ENCODE measurements at regions of chr10 and their contacts with region 1.

Region 1: GRCh38 chr10:72248468-72249151 is 25.1 kb upstream of the DDIT4 start:
- DNase-seq: peak; percentile 89
- ATAC-seq: peak; percentile 87
- H3K4me3 Mint-ChIP-seq: peak overlapping the region; percentile 77
- H3K27ac Mint-ChIP-seq: peak overlapping the region; percentile 93
- H3K4me1 Mint-ChIP-seq: peaks cover 72% of the 10 kb centered on the region
- H3K27me3 Mint-ChIP-seq: no peaks in the 10 kb centered on the region
- CTCF ChIP-seq: no peak

Region 2: DNA sequence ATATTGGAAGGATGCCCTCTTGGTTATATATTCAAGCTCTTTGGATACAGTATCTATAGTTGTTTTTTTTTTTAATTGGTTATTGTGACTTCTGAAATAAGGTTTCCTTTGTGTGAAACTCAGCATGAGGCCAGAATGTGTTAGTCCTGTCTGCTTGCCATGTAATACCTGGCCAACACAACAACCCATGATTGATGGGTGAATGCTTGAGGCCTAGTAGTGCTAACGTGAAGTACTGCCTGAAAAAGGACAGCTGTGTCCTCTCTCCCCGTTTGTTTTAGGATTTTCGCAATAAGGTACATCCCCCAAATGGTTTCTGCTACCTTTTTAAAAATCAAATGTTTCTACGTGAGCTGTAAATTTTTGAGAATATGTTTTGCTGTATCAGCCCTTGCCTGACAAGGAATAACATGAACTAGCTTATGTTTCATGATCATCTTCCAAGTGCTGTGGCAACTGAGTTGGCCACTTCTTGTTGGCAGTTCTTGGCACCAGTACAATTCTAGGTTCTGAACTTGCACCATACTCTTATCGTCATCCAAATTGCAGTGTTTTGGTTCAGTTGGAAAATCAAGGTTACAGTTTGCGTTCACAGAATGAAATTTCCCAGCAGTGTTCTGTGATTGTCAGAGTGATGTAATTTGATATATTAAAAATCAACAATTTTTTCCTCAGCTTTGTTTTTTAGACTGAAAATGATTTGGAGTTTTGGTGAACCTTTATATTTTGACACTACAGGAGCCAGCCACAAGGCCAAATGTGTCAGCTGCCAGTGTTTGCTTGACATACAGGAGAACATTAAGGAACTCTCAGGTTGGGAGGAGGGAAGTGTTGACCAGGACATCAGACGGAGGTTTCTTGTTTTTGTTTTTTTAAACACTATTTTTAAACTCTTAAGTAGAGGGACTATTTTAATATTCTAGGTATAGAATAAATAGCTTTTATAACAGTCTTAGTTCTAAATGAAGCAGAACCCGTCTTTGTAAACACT is 19.1 kb before region 1 on chr10:
- CTCF ChIA-PET with region 1: interaction called, 10 read pairs
- POLR2A ChIA-PET with region 1: interaction called, 5 read pairs
- intact Hi-C with region 1: loop called (anchors 2 kb)
- DNase-seq: no peak
- ATAC-seq: no peak
- H3K4me3 Mint-ChIP-seq: no peak overlapping the region
- H3K27ac Mint-ChIP-seq: peak overlapping the region; percentile 70
- H3K4me1 Mint-ChIP-seq: peaks cover 36% of the 10 kb centered on the region
- H3K27me3 Mint-ChIP-seq: no peaks in the 10 kb centered on the region
- CTCF ChIP-seq: no peak

Region 3: GRCh38 chr10:72260588-72261322 is 12.1 kb after region 1 on chr10:
- CTCF ChIA-PET with region 1: interaction called, 9 read pairs
- POLR2A ChIA-PET with region 1: interaction called, 36 read pairs
- intact Hi-C with region 1: no loop called
- DNase-seq: peak; percentile 96
- ATAC-seq: peak; percentile 82
- H3K4me3 Mint-ChIP-seq: peak overlapping the region; percentile 79
- H3K27ac Mint-ChIP-seq: peak overlapping the region; percentile 96
- H3K4me1 Mint-ChIP-seq: peaks cover 52% of the 10 kb centered on the region
- H3K27me3 Mint-ChIP-seq: no peaks in the 10 kb centered on the region
- CTCF ChIP-seq: no peak

Region 4: DNA sequence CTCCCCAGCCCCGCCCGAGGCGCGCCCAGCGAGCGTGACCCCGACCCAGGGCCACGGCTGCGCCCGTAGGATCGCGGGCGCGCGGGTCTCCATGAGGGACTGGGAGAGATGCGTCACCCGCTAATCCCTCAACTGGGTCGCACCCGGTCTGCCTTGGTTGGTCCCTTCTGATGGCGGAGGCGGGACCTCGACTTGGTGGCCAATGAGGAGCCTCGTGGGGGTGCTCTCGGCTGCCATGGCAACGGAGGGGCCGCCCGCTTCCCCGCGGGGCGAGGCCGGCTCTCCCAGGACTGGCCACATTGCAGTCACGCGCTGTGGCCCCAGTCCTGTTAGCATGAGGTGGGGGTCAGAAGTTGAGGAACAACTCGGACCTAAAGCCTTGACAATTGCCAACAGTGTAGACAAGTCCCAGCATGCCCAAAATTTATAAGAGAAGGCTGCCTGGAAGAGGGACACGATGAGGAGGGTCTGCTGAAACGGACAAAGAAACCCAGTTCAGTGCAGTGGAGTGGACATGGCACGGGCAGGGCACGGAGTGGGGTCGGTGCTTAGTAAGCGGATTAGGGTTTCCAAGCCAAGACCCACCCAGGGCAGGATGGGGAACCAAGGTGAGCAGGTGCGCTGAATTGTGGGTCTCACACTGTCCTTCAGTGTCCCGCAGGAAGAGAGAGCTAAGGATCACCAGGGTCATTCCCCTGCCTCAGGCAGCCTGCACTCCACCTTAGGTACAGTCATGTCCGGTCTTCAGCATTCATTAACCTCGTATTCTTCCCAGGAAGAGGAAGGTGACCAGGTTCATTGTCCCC is 49.6 kb after region 1 on chr10:
- CTCF ChIA-PET with region 1: no interaction called
- POLR2A ChIA-PET with region 1: interaction called, 18 read pairs
- intact Hi-C with region 1: loop called (anchors 5 kb)
- DNase-seq: peak; percentile 98
- ATAC-seq: peak; percentile 76
- H3K4me3 Mint-ChIP-seq: peak overlapping the region; percentile 80
- H3K27ac Mint-ChIP-seq: peak overlapping the region; percentile 99
- H3K4me1 Mint-ChIP-seq: peaks cover 54% of the 10 kb centered on the region
- H3K27me3 Mint-ChIP-seq: no peaks in the 10 kb centered on the region
- CTCF ChIP-seq: no peak

Region 5: DNA sequence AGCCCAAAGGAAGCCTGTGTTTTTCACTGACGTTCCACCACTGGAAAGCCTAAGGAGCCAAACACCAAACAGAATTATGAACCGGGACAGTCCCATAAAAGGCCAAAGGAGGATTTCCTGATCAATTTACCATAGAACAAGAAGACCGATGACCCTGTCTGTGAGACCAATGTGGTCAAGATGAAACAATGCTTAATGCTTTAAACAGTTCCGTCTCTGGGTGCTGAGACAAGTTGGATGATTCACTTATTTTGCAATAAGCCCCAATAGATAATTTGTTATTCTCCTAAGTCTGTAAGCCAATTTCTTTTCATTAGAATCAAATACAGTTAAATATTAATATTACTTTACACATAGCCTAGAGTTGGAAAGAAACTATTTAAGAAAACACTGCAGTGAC is 242.3 kb after region 1 on chr10:
- CTCF ChIA-PET with region 1: no interaction called
- POLR2A ChIA-PET with region 1: no interaction called
- intact Hi-C with region 1: no loop called
- DNase-seq: no peak
- ATAC-seq: no peak
- H3K4me3 Mint-ChIP-seq: no peak overlapping the region
- H3K27ac Mint-ChIP-seq: no peak overlapping the region
- H3K4me1 Mint-ChIP-seq: no peaks in the 10 kb centered on the region
- H3K27me3 Mint-ChIP-seq: no peaks in the 10 kb centered on the region
- CTCF ChIP-seq: no peak